SK-N-SH (cell line): ENCODE measurements at regions of chr10 and their contacts with region 1.

Region 1: DNA sequence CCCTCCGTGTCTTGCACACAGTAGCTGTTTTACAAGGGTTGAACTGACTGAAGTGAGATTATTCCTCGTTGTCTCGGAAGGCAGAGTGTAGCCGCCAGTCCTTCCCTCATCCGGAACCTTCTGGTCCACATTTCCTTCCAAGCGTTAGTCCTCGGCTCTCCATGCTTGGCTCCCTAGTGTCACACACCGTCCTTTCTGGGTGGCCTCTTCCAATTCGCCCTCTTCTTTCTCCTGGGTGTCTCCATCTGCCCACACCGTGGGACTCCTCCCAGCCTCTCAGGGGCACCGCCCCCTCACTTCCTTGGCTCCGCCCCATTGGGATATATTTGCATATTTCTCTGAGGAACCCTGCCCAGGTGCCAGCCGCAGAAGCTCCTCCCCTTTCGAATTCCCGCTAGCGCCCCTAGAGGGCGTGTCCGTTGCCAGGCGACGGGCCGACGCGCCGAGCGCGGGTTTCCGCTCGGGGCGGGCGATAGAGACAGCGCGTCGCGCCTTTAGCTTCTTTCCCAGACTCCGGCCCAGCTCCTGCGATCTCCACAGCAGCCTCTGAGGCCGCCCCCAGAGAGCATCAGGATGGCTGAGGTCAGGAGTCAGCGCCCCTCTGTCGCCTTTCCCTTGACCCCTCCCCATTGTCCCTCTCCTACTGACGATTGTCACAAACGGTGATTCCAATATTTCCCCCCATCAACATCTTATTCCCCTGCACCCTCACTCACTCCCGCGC is at the start of gene CFAP58:
- DNase-seq: peak; percentile 89
- H3K4me3 ChIP-seq: peak within 1 kb of the TSS; percentile 64 to 66
- H3K27ac ChIP-seq: 0 out of 4 replicates have a peak within 1 kb of the TSS, but pooled peaks of 1 of the 2 experiments have one; percentile 31
- H3K4me1 ChIP-seq: peaks cover 5 to 13% of the 10 kb centered on the region in 2 experiments; a peak in 3 of 4 replicates
- H3K27me3 ChIP-seq: no peaks in the 10 kb centered on the region
- CTCF ChIP-seq: peak; percentile 63
- EP300 ChIP-seq: no peak
- RAD21 ChIP-seq: peak; percentile 9; the same call in 1 of the 2 replicates
- polyA plus RNA-seq, gene CFAP58: 0.38 and 0.47 TPM in 2 replicates

Region 2: GRCh38 chr10:104284846-104285245 is 68.6 kb before region 1 on chr10:
- CTCF ChIA-PET with region 1: interaction called, 229 read pairs
- POLR2A ChIA-PET with region 1: no interaction called
- DNase-seq: no peak
- H3K4me3 ChIP-seq: no peak overlapping the region
- H3K27ac ChIP-seq: no peak overlapping the region
- H3K4me1 ChIP-seq: no peaks in the 10 kb centered on the region
- H3K27me3 ChIP-seq: no peaks in the 10 kb centered on the region
- CTCF ChIP-seq: no peak
- EP300 ChIP-seq: no peak
- RAD21 ChIP-seq: no peak

Region 3: DNA sequence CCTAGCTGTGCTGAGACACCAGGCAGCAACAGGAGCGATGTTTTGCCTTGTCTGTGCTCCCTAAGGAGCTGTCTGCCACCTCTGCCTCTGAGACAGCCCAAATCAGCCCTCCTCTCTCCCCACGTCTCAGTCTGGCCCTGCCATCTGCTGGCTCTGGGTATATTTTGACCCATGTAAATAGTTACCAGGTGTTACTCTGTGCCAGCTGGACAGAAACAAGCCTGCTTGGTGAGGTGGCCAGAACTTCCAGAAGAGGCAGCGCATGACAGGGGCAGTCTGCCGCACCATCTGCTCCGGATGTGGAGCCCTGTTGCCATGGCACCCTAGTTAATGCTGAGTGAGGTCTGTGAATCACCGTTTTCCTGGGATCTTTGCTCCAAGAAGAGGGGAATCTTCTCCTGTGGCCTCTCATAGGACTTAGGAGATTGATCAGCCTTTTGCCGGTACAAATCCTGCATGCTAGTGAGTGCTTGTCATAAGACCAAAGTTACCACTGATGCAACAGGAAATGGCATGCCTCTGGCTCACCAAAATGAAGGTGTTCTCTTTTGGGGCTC is 52.7 kb before region 1 on chr10:
- CTCF ChIA-PET with region 1: interaction called, 229 read pairs
- POLR2A ChIA-PET with region 1: no interaction called
- DNase-seq: peak; percentile 83
- H3K4me3 ChIP-seq: peak overlapping the region; percentile 9 to 15; a peak in 3 of 4 replicates
- H3K27ac ChIP-seq: peak overlapping the region; percentile 96 to 98
- H3K4me1 ChIP-seq: peaks cover 22 to 35% of the 10 kb centered on the region in 2 experiments
- H3K27me3 ChIP-seq: no peaks in the 10 kb centered on the region
- CTCF ChIP-seq: peak; percentile 39; the same call in 1 of the 2 replicates
- EP300 ChIP-seq: peak in 1 of 2 experiments; percentile 38; a peak in 1 of 4 replicates
- RAD21 ChIP-seq: peak; percentile 65

Region 4: GRCh38 chr10:104337974-104338735 is 15.3 kb before region 1 on chr10 and contains the start of gene ITPRIP:
- CTCF ChIA-PET with region 1: interaction called, 24 read pairs
- POLR2A ChIA-PET with region 1: no interaction called
- DNase-seq: peak; percentile 86
- H3K4me3 ChIP-seq: peak within 1 kb of the TSS; percentile 78 to 94
- H3K27ac ChIP-seq: peak within 1 kb of the TSS; percentile 78 to 98
- H3K4me1 ChIP-seq: peaks cover 16 to 22% of the 10 kb centered on the region in 2 experiments; a peak in 2 of 4 replicates
- H3K27me3 ChIP-seq: no peaks in the 10 kb centered on the region
- CTCF ChIP-seq: peak; percentile 38
- EP300 ChIP-seq: peak in 1 of 2 experiments; percentile 34; a peak in 1 of 4 replicates
- RAD21 ChIP-seq: no peak
- polyA plus RNA-seq, gene ITPRIP: 20.2 and 22.1 TPM in 2 replicates

Region 5: DNA sequence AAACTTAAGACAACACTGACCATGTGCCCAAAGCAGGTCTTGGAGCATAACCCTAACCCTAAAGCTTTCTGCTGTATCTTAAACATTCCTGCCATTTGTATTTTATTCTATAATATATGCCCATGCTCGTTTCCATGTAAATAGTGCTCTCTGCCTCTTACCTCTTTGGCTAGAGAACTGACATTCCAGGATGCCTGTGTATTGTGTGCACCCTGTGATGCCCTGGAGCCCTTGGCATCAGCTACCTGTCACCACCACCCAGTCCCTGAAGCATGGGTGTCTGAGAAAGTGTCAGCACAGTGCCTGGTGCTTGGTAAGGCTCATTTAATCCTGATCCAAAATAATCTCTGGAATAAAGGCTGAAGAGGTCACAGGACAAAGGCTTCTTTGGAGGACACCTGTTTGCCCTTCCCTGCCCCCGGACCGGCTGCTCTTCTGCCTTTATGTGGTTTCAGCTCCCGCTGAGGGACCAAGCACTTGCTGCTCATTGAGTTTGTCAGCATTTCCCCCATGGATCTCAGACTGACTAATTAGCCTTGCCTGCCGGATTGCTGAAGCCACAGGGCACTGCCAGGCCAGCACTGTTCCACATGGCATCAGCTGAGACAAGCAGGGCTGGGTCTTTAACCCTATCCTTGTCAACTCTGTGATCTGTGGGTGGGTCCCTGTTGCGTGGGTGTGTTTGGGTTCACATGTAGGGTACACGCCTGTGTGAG is 148.5 kb after region 1 on chr10:
- CTCF ChIA-PET with region 1: no interaction called
- POLR2A ChIA-PET with region 1: no interaction called
- DNase-seq: peak; percentile 59
- H3K4me3 ChIP-seq: no peak overlapping the region
- H3K27ac ChIP-seq: peak overlapping the region in 1 of 2 experiments; percentile 84; a peak in 2 of 4 replicates
- H3K4me1 ChIP-seq: peaks cover 0 to 33% of the 10 kb centered on the region in 2 experiments; a peak in 2 of 4 replicates
- H3K27me3 ChIP-seq: no peaks in the 10 kb centered on the region
- CTCF ChIP-seq: no peak
- EP300 ChIP-seq: no peak
- RAD21 ChIP-seq: no peak